SK-N-SH (cell line): ENCODE measurements at regions of chr18 and their contacts with region 1.

Region 1: DNA sequence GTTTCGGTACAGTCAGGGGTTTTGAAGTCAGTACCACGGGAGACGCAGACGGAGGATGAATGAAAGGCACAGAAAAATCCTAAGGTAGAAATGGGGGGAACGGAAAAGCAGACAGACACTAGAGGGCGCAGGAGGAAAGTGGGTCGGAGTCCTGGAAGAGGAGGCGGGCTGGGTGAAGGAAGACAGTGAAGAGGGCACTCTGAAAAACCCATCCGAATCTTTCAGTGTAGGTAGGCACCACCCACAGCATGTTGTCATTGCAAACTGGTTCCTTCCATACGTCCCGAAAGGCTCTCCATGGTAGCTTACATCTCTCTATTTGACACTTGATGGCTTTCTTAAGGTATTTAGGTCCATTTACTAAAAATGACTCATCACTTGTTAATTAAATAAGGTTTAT is 18.5 kb upstream of the ZNF236 start:
- DNase-seq: peak; percentile 77
- H3K4me3 ChIP-seq: peak overlapping the region in 1 of 2 experiments; percentile 38; a peak in 1 of 4 replicates
- H3K27ac ChIP-seq: no peak overlapping the region
- H3K4me1 ChIP-seq: peaks cover 0 to 7% of the 10 kb centered on the region in 2 experiments; a peak in 2 of 4 replicates
- H3K27me3 ChIP-seq: no peaks in the 10 kb centered on the region
- CTCF ChIP-seq: peak; percentile 85
- EP300 ChIP-seq: no peak
- RAD21 ChIP-seq: peak; percentile 64

Region 2: GRCh38 chr18:76783759-76784484 is 19.9 kb before region 1 on chr18:
- CTCF ChIA-PET with region 1: interaction called, 90 read pairs
- POLR2A ChIA-PET with region 1: interaction called, 5 read pairs
- DNase-seq: no peak
- H3K4me3 ChIP-seq: no peak overlapping the region
- H3K27ac ChIP-seq: no peak overlapping the region
- H3K4me1 ChIP-seq: no peaks in the 10 kb centered on the region
- H3K27me3 ChIP-seq: no peaks in the 10 kb centered on the region
- CTCF ChIP-seq: no peak
- EP300 ChIP-seq: no peak
- RAD21 ChIP-seq: no peak

Region 3: GRCh38 chr18:76791106-76791505 is 12.7 kb before region 1 on chr18:
- CTCF ChIA-PET with region 1: interaction called, 90 read pairs
- POLR2A ChIA-PET with region 1: interaction called, 5 read pairs
- DNase-seq: no peak
- H3K4me3 ChIP-seq: no peak overlapping the region
- H3K27ac ChIP-seq: no peak overlapping the region
- H3K4me1 ChIP-seq: no peaks in the 10 kb centered on the region
- H3K27me3 ChIP-seq: no peaks in the 10 kb centered on the region
- CTCF ChIP-seq: no peak
- EP300 ChIP-seq: no peak
- RAD21 ChIP-seq: no peak

Region 4: GRCh38 chr18:76816127-76816526 is 12.3 kb after region 1 on chr18:
- CTCF ChIA-PET with region 1: interaction called, 55 read pairs
- POLR2A ChIA-PET with region 1: interaction called, 3 read pairs
- DNase-seq: no peak
- H3K4me3 ChIP-seq: no peak overlapping the region
- H3K27ac ChIP-seq: no peak overlapping the region
- H3K4me1 ChIP-seq: peaks cover 2 to 3% of the 10 kb centered on the region in 2 experiments; a peak in 1 of 4 replicates
- H3K27me3 ChIP-seq: no peaks in the 10 kb centered on the region
- CTCF ChIP-seq: no peak
- EP300 ChIP-seq: no peak
- RAD21 ChIP-seq: no peak

Region 5: GRCh38 chr18:76822510-76823160 is 18.8 kb after region 1 on chr18 and contains the start of gene ZNF236:
- CTCF ChIA-PET with region 1: interaction called, 55 read pairs
- POLR2A ChIA-PET with region 1: interaction called, 3 read pairs
- DNase-seq: peak; percentile 96
- H3K4me3 ChIP-seq: peak within 1 kb of the TSS; percentile 85 to 96
- H3K27ac ChIP-seq: peak within 1 kb of the TSS; percentile 81 to 91
- H3K4me1 ChIP-seq: peaks cover 3 to 13% of the 10 kb centered on the region in 2 experiments; a peak in 2 of 4 replicates
- H3K27me3 ChIP-seq: no peaks in the 10 kb centered on the region
- CTCF ChIP-seq: no peak
- EP300 ChIP-seq: peak in 1 of 2 experiments; percentile 18; a peak in 1 of 4 replicates
- RAD21 ChIP-seq: no peak
- polyA plus RNA-seq, gene ZNF236: 4.2 and 6.0 TPM in 2 replicates